CD4-positive, alpha-beta memory T cell (primary cell): ENCODE measurements at regions of chr2 and their contacts with region 1.

Region 1: DNA sequence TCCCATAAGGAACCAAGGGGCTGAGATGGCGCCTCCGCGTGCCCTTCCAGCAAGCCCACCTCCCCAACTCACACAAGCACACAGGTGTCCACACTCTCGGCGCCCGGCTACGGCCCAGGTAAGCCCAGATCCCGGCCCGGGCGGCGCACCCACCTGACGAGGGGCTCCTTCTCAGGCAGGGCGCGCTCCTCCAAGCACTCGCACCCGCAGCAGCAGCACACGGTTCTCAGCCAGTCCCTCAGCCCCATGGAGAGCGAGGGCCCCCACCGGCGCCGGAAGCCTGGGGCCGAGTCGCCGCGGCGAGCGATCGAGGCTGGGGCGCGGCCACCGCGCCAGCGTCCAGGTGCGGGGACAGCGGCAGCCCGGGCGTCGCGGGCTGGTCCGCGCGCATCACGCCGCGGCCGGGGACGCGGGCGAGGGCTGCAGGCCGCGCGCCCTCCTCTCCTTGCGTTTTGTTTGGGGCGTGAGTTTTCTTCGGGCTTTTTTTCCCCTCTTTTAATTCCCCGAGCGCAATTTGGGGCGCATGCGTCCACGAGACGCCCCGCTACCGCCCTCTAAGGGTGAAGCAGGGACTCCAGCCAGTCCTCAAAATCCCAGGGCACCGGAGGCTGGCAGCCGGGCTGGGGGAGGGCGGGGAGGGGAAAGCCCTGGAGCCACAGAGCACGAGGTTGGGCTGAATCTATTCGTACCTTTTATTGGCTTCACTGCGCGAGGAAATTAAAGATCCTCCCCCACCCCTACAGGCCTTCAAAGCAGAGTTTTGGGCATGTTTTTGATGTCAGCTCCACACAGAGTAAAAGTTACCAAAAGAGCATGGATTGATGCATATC is at the start of gene MREG:
- DNase-seq: peak; percentile 79 to 85 (median 82)
- H3K4me3 ChIP-seq: peak within 1 kb of the TSS in 1 of 2 donors; percentile 63
- H3K4me3 Mint-ChIP-seq: peak within 1 kb of the TSS; percentile 89 to 93 (median 90)
- H3K27ac ChIP-seq: no peak within 1 kb of the TSS
- H3K27ac Mint-ChIP-seq: peak within 1 kb of the TSS; percentile 54 to 89 (median 80)
- H3K4me1 ChIP-seq: peaks cover 47% of the 10 kb centered on the region
- H3K4me1 Mint-ChIP-seq: peaks cover 39 to 61% (median 46%) of the 10 kb centered on the region in 4 donors
- H3K27me3 ChIP-seq: no peaks in the 10 kb centered on the region
- H3K27me3 Mint-ChIP-seq: no peaks in the 10 kb centered on the region
- total RNA-seq, gene MREG: 7.4 TPM

Region 2: GRCh38 chr2:215311625-215312396 is 701.5 kb before region 1 on chr2 and contains the start of gene ATIC:
- CTCF ChIA-PET with region 1: no interaction called
- POLR2A ChIA-PET with region 1: no interaction called
- intact Hi-C with region 1: loop called (anchors 10 kb)
- DNase-seq: peak; percentile 84 to 90 (median 87)
- H3K4me3 ChIP-seq: peak within 1 kb of the TSS; percentile 63 to 93
- H3K4me3 Mint-ChIP-seq: peak within 1 kb of the TSS; percentile 93 to 98 (median 96)
- H3K27ac ChIP-seq: peak within 1 kb of the TSS; percentile 75
- H3K27ac Mint-ChIP-seq: peak within 1 kb of the TSS; percentile 89 to 97 (median 94)
- H3K4me1 ChIP-seq: peaks cover 25% of the 10 kb centered on the region
- H3K4me1 Mint-ChIP-seq: peaks cover 28 to 44% (median 39%) of the 10 kb centered on the region in 4 donors
- H3K27me3 ChIP-seq: no peaks in the 10 kb centered on the region
- H3K27me3 Mint-ChIP-seq: no peaks in the 10 kb centered on the region
- total RNA-seq, gene ATIC: 85.1 to 87.1 TPM

Region 3: DNA sequence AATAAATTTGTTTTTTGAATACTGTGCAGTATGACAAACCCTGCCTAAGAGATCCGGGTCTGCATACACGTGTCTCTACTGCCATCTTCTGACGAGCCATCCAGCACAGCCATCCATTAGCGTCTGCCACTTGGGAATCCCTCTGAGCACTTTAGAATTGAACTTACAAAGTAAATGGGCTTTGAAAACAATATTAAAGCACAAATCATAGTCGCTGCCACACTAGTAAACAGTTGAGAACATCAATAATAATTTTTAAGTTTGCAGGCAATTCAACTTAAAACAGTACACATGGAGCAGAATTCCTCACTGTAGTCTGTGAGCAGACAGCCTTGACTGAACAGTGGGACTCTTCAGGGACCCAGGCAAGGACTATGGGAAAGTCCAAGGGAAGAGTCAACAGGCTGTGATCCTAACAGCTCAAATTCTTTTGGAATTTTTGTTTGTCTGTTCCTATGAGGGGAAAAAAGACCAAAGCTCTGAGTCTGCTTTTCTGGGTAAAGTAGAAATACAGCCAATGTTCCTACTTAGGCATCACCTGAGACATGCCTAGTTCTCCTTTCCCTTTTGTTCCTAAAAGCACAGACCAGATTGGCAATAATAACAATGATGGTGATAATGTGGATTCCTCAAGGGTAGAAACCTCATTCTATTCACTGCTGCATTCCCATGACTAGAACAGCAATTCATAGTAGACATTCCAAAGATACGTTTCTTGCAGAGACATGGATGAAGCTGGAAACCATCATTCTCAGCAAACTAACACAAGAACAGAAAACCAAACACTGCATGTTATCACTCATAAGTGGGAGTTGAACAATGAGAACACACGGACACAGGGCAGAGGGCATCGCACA is 92.8 kb before region 1 on chr2:
- CTCF ChIA-PET with region 1: no interaction called
- POLR2A ChIA-PET with region 1: no interaction called
- intact Hi-C with region 1: no loop called
- DNase-seq: peak; percentile 43 to 50 (median 46)
- H3K4me3 ChIP-seq: no peak overlapping the region
- H3K4me3 Mint-ChIP-seq: no peak overlapping the region
- H3K27ac ChIP-seq: no peak overlapping the region
- H3K27ac Mint-ChIP-seq: no peak overlapping the region
- H3K4me1 ChIP-seq: no peaks in the 10 kb centered on the region
- H3K4me1 Mint-ChIP-seq: no peaks in the 10 kb centered on the region
- H3K27me3 ChIP-seq: no peaks in the 10 kb centered on the region
- H3K27me3 Mint-ChIP-seq: peaks cover 4 to 8% of the 10 kb centered on the region in 2 donors

Region 4: DNA sequence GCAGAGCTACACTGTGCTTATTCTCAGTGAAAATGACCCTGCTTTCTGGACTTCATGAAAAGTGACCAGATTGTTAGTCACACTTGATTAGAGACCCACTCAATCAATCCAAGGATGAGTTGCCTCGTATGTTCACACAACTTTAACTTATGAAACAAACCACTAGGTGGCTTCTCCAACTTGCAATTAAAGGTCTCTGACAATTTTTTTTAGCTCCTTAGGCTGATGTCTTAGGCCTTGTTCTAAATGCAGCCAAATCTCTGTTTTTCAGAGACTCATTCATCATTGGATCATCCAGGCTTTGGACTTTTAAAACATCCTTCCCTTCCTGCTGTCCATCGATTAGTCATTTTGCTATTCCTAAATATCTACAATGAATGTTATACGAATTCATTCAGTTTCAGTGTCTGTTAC is 63.3 kb before region 1 on chr2:
- CTCF ChIA-PET with region 1: interaction called, 4 read pairs
- POLR2A ChIA-PET with region 1: no interaction called
- intact Hi-C with region 1: loop called (anchors 2 kb)
- DNase-seq: peak in 4 of 5 donors; percentile 16 to 31 (median 22)
- H3K4me3 ChIP-seq: no peak overlapping the region
- H3K4me3 Mint-ChIP-seq: no peak overlapping the region
- H3K27ac ChIP-seq: no peak overlapping the region
- H3K27ac Mint-ChIP-seq: no peak overlapping the region
- H3K4me1 ChIP-seq: no peaks in the 10 kb centered on the region
- H3K4me1 Mint-ChIP-seq: peaks cover 0 to 4% (median 0%) of the 10 kb centered on the region in 4 donors
- H3K27me3 ChIP-seq: no peaks in the 10 kb centered on the region
- H3K27me3 Mint-ChIP-seq: no peaks in the 10 kb centered on the region

Region 5: GRCh38 chr2:216081487-216082116 is 68.3 kb after region 1 on chr2 and contains the starts of genes PECR and TMEM169:
- CTCF ChIA-PET with region 1: interaction called, 6 read pairs
- POLR2A ChIA-PET with region 1: interaction called, 10 read pairs
- intact Hi-C with region 1: no loop called
- DNase-seq: peak; percentile 69 to 79 (median 74)
- H3K4me3 ChIP-seq: peak within 1 kb of the TSS; percentile 74 to 87
- H3K4me3 Mint-ChIP-seq: peak within 1 kb of the TSS; percentile 83 to 97 (median 94)
- H3K27ac ChIP-seq: peak within 1 kb of the TSS; percentile 65
- H3K27ac Mint-ChIP-seq: peak within 1 kb of the TSS; percentile 78 to 98 (median 92)
- H3K4me1 ChIP-seq: peaks cover 67% of the 10 kb centered on the region
- H3K4me1 Mint-ChIP-seq: peaks cover 41 to 69% (median 55%) of the 10 kb centered on the region in 4 donors
- H3K27me3 ChIP-seq: no peaks in the 10 kb centered on the region
- H3K27me3 Mint-ChIP-seq: no peaks in the 10 kb centered on the region
- total RNA-seq, gene PECR: 16.8 to 20.6 TPM
- total RNA-seq, gene TMEM169: 3.6 to 5.1 TPM

Region 6: GRCh38 chr2:216151313-216152030 is 138.2 kb after region 1 on chr2:
- CTCF ChIA-PET with region 1: no interaction called
- POLR2A ChIA-PET with region 1: no interaction called
- intact Hi-C with region 1: no loop called
- DNase-seq: no peak
- H3K4me3 ChIP-seq: no peak overlapping the region
- H3K4me3 Mint-ChIP-seq: no peak overlapping the region
- H3K27ac ChIP-seq: no peak overlapping the region
- H3K27ac Mint-ChIP-seq: peak overlapping the region in 5 of 7 donors; percentile 2 to 73 (median 45)
- H3K4me1 ChIP-seq: no peaks in the 10 kb centered on the region
- H3K4me1 Mint-ChIP-seq: peaks cover 20 to 30% (median 24%) of the 10 kb centered on the region in 4 donors
- H3K27me3 ChIP-seq: no peaks in the 10 kb centered on the region
- H3K27me3 Mint-ChIP-seq: no peaks in the 10 kb centered on the region